Activated T-helper 1 cell treated with anti-CD3 and anti-CD28 coated beads, Interleukin-12 subunit alpha, Interleukin-12 subunit beta, Interleukin-2, Interleukin-4 antibody, amounts not matched to agents 30 ng/mL and 10 ng/mL and 1 ng/mL, durations not matched to agents 14 hours and 24 hours and 36 hours (primary cell): ENCODE measurements at regions of chr7 and their contacts with region 1.

Region 1: DNA sequence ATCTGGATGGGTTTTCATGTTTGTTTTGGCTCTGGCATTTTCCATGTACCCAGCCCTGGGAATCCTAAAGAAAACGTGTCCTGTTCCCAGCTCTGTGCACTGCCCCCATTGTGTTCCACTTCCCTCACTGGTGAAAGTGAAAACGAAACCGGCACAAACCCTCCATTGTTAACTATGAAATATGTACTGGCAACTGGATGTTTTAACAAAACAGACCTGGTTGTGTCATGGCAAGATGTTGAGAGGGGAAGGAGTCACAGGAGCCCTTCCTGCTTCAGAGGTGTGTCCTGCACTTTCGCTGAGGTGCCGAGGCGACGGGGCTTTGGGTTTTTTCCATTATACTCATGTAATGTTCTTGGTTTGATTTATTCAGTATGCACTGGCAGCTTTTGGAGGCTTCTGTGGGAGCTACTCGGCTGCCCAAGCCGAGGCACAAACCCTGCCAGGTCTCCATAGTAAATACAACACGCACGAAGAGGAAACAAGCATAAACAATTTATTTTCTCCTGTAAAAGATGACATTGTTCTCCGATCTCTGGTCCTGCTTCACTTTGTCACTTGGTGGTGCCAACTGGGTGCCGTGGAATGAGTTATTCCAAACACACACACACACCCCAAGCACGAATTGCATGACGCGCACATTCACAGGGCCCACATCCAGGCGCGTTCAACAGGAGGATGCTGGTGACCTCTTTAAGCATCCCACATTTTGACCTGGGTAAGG is 118.2 kb downstream of the CDK6 start:
- DNase-seq: peak; percentile 72
- H3K4me3 Mint-ChIP-seq: peak overlapping the region; percentile 81
- H3K27ac Mint-ChIP-seq: peak overlapping the region; percentile 85
- H3K4me1 Mint-ChIP-seq: peaks cover 72% of the 10 kb centered on the region
- H3K27me3 Mint-ChIP-seq: no peaks in the 10 kb centered on the region

Region 2: DNA sequence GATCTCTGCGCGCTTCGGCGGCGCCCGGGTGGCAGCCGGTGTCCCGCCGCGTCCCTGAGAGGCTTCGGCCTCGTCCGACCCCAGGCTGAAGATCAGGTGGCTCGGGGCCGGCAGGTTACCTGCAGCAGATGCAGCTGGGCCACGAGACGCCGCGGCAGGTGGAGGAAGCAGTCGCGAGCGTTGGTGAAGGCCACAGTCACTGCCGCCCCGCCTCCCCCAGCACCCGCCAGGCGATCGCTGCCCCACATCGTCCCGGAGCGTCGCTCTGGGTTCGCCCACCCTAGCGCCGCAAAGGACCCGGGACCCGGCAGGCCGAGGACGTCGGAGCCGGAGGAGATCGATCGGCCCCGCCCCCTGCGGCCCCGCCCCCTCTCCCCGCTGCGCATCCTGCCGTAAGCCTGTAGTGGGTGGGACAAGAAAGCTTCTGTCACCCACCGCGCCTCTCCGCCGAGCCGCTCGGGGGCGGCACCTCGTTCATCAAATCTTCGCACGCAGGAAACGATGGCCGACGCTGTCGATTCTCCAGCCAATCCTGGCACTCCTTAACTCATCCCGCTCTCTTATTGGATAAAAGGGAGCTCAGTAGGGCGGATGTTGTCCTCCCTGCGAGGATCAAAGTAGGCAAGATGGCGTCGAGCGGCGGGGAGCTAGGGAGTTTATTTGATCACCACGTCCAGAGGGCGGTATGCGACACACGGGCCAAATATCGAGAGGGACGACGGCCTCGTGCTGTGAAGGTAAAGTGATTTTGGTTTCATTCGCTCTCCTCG is 189.8 kb before region 1 on chr7 and contains the starts of genes PEX1 and RBM48:
- intact Hi-C with region 1: loop called (anchors 5 kb)
- DNase-seq: peak; percentile 94
- H3K4me3 Mint-ChIP-seq: peak within 1 kb of the TSS; percentile 91
- H3K27ac Mint-ChIP-seq: peak within 1 kb of the TSS; percentile 94
- H3K4me1 Mint-ChIP-seq: peaks cover 24% of the 10 kb centered on the region
- H3K27me3 Mint-ChIP-seq: no peaks in the 10 kb centered on the region
- total RNA-seq, gene PEX1: 14.7 and 17.0 TPM in 2 replicates
- total RNA-seq, gene RBM48: 17.2 and 17.6 TPM in 2 replicates

Region 3: DNA sequence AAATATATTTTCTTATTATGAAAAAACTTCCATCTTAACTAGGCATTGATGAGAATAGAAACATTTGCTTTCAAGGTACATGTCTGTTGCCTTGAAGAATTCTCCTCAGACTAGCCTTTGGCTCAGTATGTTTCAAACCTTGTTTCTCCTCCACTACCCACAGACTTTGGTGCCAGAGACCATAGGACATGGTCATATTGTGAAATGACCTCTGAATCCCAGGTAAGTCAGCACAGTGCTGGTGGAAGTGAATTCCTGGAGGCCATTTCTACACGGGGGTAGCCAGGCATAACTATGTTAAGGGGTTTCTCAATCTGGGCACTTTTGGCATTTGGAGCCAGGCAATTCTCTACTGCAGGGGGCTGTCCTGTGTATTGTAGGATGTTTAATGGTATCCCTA is 15.6 kb before region 1 on chr7:
- intact Hi-C with region 1: loop called (anchors 2 kb)
- DNase-seq: no peak
- H3K4me3 Mint-ChIP-seq: no peak overlapping the region
- H3K27ac Mint-ChIP-seq: no peak overlapping the region
- H3K4me1 Mint-ChIP-seq: peaks cover 42% of the 10 kb centered on the region
- H3K27me3 Mint-ChIP-seq: no peaks in the 10 kb centered on the region

Region 4: GRCh38 chr7:92768501-92769393 is 50.6 kb after region 1 on chr7:
- intact Hi-C with region 1: loop called (anchors 2 kb)
- DNase-seq: peak; percentile 20
- H3K4me3 Mint-ChIP-seq: peak overlapping the region; percentile 47
- H3K27ac Mint-ChIP-seq: peak overlapping the region; percentile 85
- H3K4me1 Mint-ChIP-seq: peaks cover 83% of the 10 kb centered on the region
- H3K27me3 Mint-ChIP-seq: no peaks in the 10 kb centered on the region